ENCODE measurements at regions of chr9 and their contacts with region 1.

Region 1: GRCh38 chr9:5425006-5425628 is 12.6 kb downstream of the PLGRKT start:
- DNase-seq: no peak
- ATAC-seq: peak; percentile 78
- H3K4me3 Mint-ChIP-seq: no peak overlapping the region
- H3K27ac Mint-ChIP-seq: no peak overlapping the region
- H3K4me1 Mint-ChIP-seq: peaks cover 15% of the 10 kb centered on the region
- H3K27me3 Mint-ChIP-seq: no peaks in the 10 kb centered on the region

Region 2: GRCh38 chr9:4750023-4750673 is 675.0 kb before region 1 on chr9:
- CTCF ChIA-PET with region 1: no interaction called
- POLR2A ChIA-PET with region 1: no interaction called
- intact Hi-C with region 1: loop called in 1 of 2 experiments (anchors 5 kb)
- DNase-seq: no peak
- ATAC-seq: peak; percentile 39
- H3K4me3 Mint-ChIP-seq: no peak overlapping the region
- H3K27ac Mint-ChIP-seq: no peak overlapping the region
- H3K4me1 Mint-ChIP-seq: peaks cover 18% of the 10 kb centered on the region
- H3K27me3 Mint-ChIP-seq: no peaks in the 10 kb centered on the region

Region 3: GRCh38 chr9:5073701-5074100 is 351.4 kb before region 1 on chr9:
- CTCF ChIA-PET with region 1: no interaction called
- POLR2A ChIA-PET with region 1: no interaction called
- intact Hi-C with region 1: loop called in 1 of 2 experiments (anchors 10 kb)
- DNase-seq: no peak
- ATAC-seq: no peak
- H3K4me3 Mint-ChIP-seq: no peak overlapping the region
- H3K27ac Mint-ChIP-seq: no peak overlapping the region
- H3K4me1 Mint-ChIP-seq: peaks cover 3% of the 10 kb centered on the region
- H3K27me3 Mint-ChIP-seq: no peaks in the 10 kb centered on the region

Region 4: DNA sequence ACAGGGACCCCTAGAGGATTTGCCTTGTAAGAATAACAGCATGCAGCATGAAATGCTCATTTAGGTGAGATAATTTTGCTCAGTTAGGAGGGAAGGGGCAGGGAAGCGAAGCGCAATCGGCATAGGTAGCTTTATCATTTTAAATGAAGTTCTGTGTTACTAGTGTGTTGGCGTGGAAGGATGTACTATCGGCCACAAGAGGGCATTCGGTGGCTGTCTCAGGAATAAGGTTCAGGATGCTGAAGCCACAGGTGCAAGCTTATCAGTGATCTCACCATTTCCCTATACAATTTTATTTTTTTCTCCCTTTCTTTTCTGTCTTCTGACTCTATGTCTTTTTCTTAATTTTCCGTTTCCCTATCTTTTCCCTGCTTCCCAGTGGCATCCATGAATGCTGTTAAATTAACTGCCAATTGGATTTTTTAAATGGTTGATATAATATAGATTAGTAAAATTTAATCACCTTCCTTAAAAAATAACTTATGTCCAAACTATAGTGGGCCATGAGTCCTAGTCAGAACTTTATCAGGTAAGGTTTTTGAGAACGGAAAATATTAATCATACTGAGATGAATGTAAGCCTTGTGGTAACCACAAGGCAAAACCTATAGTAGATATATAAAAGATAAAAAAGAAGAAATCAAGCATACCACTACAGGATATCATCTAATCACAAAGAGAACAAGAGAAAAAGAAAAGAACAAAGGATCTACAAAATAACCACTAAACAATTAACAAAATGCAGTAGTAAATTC is 238.5 kb before region 1 on chr9:
- CTCF ChIA-PET with region 1: interaction called, 31 read pairs
- POLR2A ChIA-PET with region 1: no interaction called
- intact Hi-C with region 1: loop called (anchors 1 kb)
- DNase-seq: peak; percentile 75
- ATAC-seq: peak; percentile 84
- H3K4me3 Mint-ChIP-seq: no peak overlapping the region
- H3K27ac Mint-ChIP-seq: no peak overlapping the region
- H3K4me1 Mint-ChIP-seq: peaks cover 17% of the 10 kb centered on the region
- H3K27me3 Mint-ChIP-seq: no peaks in the 10 kb centered on the region

Region 5: GRCh38 chr9:5301544-5301943 is 123.6 kb before region 1 on chr9:
- CTCF ChIA-PET with region 1: no interaction called
- POLR2A ChIA-PET with region 1: no interaction called
- intact Hi-C with region 1: loop called in 1 of 2 experiments (anchors 10 kb)
- DNase-seq: no peak
- ATAC-seq: no peak
- H3K4me3 Mint-ChIP-seq: peak overlapping the region; percentile 51
- H3K27ac Mint-ChIP-seq: peak overlapping the region; percentile 51
- H3K4me1 Mint-ChIP-seq: peaks cover 22% of the 10 kb centered on the region
- H3K27me3 Mint-ChIP-seq: no peaks in the 10 kb centered on the region

Region 6: GRCh38 chr9:5336688-5337087 is 88.4 kb before region 1 on chr9:
- CTCF ChIA-PET with region 1: no interaction called
- POLR2A ChIA-PET with region 1: no interaction called
- intact Hi-C with region 1: loop called in 1 of 2 experiments (anchors 5 kb)
- DNase-seq: peak; percentile 14
- ATAC-seq: no peak
- H3K4me3 Mint-ChIP-seq: peak overlapping the region; percentile 49
- H3K27ac Mint-ChIP-seq: peak overlapping the region; percentile 52
- H3K4me1 Mint-ChIP-seq: peaks cover 37% of the 10 kb centered on the region
- H3K27me3 Mint-ChIP-seq: no peaks in the 10 kb centered on the region

Region 7: GRCh38 chr9:6655036-6655435 is 1229.9 kb after region 1 on chr9:
- CTCF ChIA-PET with region 1: no interaction called
- POLR2A ChIA-PET with region 1: no interaction called
- intact Hi-C with region 1: no loop called
- DNase-seq: no peak
- ATAC-seq: no peak
- H3K4me3 Mint-ChIP-seq: no peak overlapping the region
- H3K27ac Mint-ChIP-seq: no peak overlapping the region
- H3K4me1 Mint-ChIP-seq: peaks cover 3% of the 10 kb centered on the region
- H3K27me3 Mint-ChIP-seq: peaks cover 5% of the 10 kb centered on the region